Caco-2 (cell line): ENCODE measurements at regions of chr12 and their contacts with region 1.

Region 1: DNA sequence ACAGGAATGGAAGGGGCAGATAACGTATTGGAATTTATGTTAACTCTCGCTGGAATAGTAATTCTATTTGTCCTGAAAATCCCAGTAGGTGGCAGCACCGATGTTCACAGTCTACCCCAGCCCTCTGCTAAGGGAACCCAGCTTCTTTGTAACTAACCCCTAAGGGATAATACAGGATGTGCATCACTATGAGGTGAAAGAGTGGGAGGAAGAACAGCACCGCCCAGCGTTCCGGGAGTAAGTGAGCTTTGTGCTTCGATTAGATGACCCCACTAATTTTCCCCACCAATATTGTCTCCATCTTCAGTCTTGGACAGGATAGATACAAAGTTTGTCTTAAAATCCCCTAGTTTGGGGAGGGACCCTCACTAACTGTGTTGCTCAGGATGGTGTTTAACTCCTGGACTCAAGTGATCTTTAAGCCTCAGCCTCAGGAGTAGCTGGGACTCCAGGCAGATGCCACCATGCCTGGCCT is 2.7 kb downstream of the SLC2A3 start:
- DNase-seq: peak; percentile 85 to 87
- H3K4me3 ChIP-seq: peak overlapping the region; percentile 76
- H3K4me3 Mint-ChIP-seq: no peak overlapping the region
- H3K27ac Mint-ChIP-seq: no peak overlapping the region
- H3K4me1 ChIP-seq: peaks cover 46% of the 10 kb centered on the region
- H3K4me1 Mint-ChIP-seq: peaks cover 33% of the 10 kb centered on the region
- H3K27me3 ChIP-seq: no peaks in the 10 kb centered on the region
- H3K27me3 Mint-ChIP-seq: no peaks in the 10 kb centered on the region
- CTCF ChIP-seq: peak; percentile 79 to 82

Region 2: DNA sequence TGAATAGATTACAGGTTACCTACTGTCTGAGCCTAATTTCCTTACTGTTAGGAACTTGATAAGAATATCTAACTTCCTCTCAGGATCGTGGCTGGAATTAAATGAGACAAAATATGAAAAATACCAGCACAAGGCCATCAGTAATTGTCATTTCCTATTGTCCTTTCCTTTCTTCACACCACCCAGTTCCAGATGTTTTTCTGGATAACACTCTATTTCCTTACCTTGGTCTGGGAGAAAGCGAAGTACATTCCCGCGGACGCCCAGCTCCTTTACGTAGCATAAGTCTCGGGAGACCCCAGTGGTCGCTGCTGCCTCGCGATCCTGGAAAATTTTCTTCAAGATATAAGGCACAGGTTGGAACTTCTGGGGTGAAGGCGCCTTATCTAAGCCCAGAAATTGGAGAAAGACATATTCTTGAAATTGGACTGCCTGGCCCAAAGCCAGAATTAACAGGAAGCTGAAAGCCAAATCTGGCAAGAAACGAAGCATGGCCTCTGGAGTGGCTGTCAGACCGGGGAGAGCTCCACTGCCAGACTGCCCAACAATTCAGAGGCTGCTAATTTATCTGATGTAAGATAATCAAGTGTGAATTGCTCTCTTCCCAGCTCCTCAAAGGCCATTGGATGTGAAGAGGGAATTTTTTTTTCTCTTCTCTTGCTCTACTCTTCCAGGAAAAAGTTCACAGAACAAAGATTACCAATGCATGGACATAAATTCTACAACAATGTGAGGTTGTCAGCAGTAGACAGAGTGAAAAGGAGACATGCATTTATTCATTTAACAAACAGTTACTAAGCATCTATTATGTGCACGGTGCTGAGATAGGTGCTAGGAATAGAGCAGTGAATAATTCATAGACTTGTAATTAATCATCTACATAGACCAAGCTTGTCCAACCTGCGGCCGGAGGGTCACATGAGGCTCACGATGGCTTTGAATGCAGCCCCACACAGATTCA is 237.8 kb before region 1 on chr12 and contains the start of gene GDF3:
- CTCF ChIA-PET with region 1: no interaction called
- POLR2A ChIA-PET with region 1: no interaction called
- intact Hi-C with region 1: no loop called
- DNase-seq: no peak
- H3K4me3 ChIP-seq: no peak within 1 kb of the TSS
- H3K4me3 Mint-ChIP-seq: no peak within 1 kb of the TSS
- H3K27ac Mint-ChIP-seq: peak within 1 kb of the TSS; percentile 21
- H3K4me1 ChIP-seq: peaks cover 6% of the 10 kb centered on the region
- H3K4me1 Mint-ChIP-seq: peaks cover 27% of the 10 kb centered on the region
- H3K27me3 ChIP-seq: no peaks in the 10 kb centered on the region
- H3K27me3 Mint-ChIP-seq: no peaks in the 10 kb centered on the region
- CTCF ChIP-seq: no peak
- total RNA-seq, gene GDF3: 0.41 TPM in 1 of 2 replicates, not detected in the other

Region 3: DNA sequence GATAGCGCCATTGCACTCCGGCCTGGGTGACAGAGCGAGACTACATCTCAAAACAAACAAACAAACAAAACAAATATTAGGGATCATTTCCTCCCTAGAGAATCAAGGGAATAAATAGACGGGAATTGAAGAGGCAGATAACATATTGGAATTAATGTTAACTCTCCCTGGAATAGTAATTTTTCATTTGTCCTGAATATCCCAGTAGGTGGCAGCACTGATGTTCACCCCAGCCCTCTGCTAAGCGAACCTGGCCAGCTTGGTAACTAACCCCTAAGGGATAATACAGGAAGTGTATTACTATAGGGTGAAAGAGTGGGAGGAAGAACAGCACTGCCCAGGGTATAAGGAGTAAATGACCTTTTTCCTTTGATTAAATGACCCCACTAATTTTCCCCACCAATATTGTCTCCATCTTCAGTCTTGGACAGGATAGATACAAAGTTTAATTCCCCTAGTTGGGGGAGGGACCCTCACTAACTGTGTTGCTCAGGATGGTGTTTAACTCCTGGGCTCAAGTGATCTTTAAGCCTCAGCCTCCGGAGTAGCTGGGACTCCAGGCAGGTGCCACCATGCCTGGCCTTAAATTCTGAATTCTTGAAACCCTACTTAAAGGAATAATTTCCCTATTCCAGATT is 101.1 kb before region 1 on chr12:
- CTCF ChIA-PET with region 1: interaction called, 13 read pairs
- POLR2A ChIA-PET with region 1: interaction called, 8 read pairs
- intact Hi-C with region 1: no loop called
- DNase-seq: peak; percentile 80 to 85
- H3K4me3 ChIP-seq: no peak overlapping the region
- H3K4me3 Mint-ChIP-seq: peak overlapping the region; percentile 1
- H3K27ac Mint-ChIP-seq: peak overlapping the region; percentile 60
- H3K4me1 ChIP-seq: peaks cover 61% of the 10 kb centered on the region
- H3K4me1 Mint-ChIP-seq: peaks cover 51% of the 10 kb centered on the region
- H3K27me3 ChIP-seq: no peaks in the 10 kb centered on the region
- H3K27me3 Mint-ChIP-seq: no peaks in the 10 kb centered on the region
- CTCF ChIP-seq: peak; percentile 73 to 86

Region 4: DNA sequence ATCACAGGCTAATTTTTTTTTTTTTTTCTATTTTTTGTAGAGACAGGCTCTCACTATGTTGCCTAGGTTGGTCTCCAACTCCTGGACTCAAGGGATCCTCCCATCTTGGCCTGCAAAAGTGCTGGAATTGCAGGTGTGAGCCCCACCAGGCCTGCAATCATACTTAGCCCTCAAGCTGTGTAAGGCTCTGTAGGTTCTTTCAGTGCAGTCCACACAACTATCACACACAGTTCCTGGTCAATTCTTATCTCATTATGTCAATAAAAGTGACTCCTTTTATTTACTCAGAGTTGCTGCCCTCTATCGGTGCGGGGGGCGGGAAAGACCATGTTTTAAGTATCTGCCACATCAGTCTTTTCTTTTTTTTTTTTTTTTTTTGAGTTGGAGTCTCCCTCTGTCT is 26.3 kb before region 1 on chr12:
- CTCF ChIA-PET with region 1: interaction called, 16 read pairs
- POLR2A ChIA-PET with region 1: interaction called, 9 read pairs
- intact Hi-C with region 1: no loop called
- DNase-seq: peak; percentile 96 to 98
- H3K4me3 ChIP-seq: no peak overlapping the region
- H3K4me3 Mint-ChIP-seq: peak overlapping the region; percentile 54
- H3K27ac Mint-ChIP-seq: peak overlapping the region; percentile 98
- H3K4me1 ChIP-seq: peaks cover 34% of the 10 kb centered on the region
- H3K4me1 Mint-ChIP-seq: peaks cover 38% of the 10 kb centered on the region
- H3K27me3 ChIP-seq: no peaks in the 10 kb centered on the region
- H3K27me3 Mint-ChIP-seq: no peaks in the 10 kb centered on the region
- CTCF ChIP-seq: peak; percentile 81 to 83

Region 5: GRCh38 chr12:7948589-7949260 is 15.4 kb after region 1 on chr12:
- CTCF ChIA-PET with region 1: interaction called, 4 read pairs
- POLR2A ChIA-PET with region 1: interaction called, 25 read pairs
- intact Hi-C with region 1: no loop called
- DNase-seq: no peak
- H3K4me3 ChIP-seq: no peak overlapping the region
- H3K4me3 Mint-ChIP-seq: peak overlapping the region; percentile 13
- H3K27ac Mint-ChIP-seq: peak overlapping the region; percentile 18
- H3K4me1 ChIP-seq: peaks cover 22% of the 10 kb centered on the region
- H3K4me1 Mint-ChIP-seq: peaks cover 18% of the 10 kb centered on the region
- H3K27me3 ChIP-seq: no peaks in the 10 kb centered on the region
- H3K27me3 Mint-ChIP-seq: no peaks in the 10 kb centered on the region
- CTCF ChIP-seq: no peak

Region 6: GRCh38 chr12:7970475-7971252 is 37.4 kb after region 1 on chr12:
- CTCF ChIA-PET with region 1: interaction called, 5 read pairs
- POLR2A ChIA-PET with region 1: interaction called, 749 read pairs
- intact Hi-C with region 1: loop called (anchors 1 kb)
- DNase-seq: peak; percentile 99
- H3K4me3 ChIP-seq: peak overlapping the region; percentile 43
- H3K4me3 Mint-ChIP-seq: peak overlapping the region; percentile 75
- H3K27ac Mint-ChIP-seq: peak overlapping the region; percentile 76
- H3K4me1 ChIP-seq: peaks cover 34% of the 10 kb centered on the region
- H3K4me1 Mint-ChIP-seq: peaks cover 15% of the 10 kb centered on the region
- H3K27me3 ChIP-seq: no peaks in the 10 kb centered on the region
- H3K27me3 Mint-ChIP-seq: no peaks in the 10 kb centered on the region
- CTCF ChIP-seq: peak in 1 of 2 experiments; percentile 43

Region 7: DNA sequence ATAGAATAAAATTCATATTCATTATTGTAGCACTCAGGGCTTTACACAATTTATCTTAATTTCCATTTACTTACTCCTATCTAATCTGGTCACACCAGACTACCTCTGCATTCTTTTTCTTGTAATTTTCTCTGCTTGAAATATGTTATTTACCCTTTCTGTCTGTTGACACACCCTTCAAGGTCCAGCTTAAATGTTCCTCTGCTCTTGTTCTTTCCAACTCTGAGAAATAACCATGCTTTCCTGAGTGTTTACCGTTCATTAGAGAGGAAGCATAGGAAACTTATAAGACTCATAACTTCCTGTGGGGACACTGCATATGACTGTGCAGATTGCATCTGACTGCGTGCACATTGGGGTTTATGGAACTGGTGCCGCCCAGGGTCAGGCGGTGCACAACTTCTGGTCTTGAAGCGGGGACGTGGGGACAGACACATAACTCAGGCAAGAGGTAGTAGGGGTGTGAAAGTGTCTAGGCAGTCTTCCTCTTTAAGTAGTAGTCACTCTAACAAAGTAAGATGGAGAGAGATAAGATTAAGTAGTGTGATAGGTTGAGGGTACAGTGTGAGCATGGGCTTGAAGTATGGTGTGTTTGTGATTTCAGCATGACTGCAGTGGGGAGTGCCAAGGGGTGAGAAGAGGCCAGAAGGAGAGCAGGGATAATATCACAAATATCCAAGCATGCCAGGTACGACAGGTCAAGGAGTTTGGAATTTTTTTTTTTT is 56.7 kb after region 1 on chr12:
- CTCF ChIA-PET with region 1: interaction called, 25 read pairs
- POLR2A ChIA-PET with region 1: interaction called, 19 read pairs
- intact Hi-C with region 1: loop called (anchors 1 kb)
- DNase-seq: peak; percentile 71 to 85
- H3K4me3 ChIP-seq: no peak overlapping the region
- H3K4me3 Mint-ChIP-seq: peak overlapping the region; percentile 52
- H3K27ac Mint-ChIP-seq: peak overlapping the region; percentile 82
- H3K4me1 ChIP-seq: peaks cover 94% of the 10 kb centered on the region
- H3K4me1 Mint-ChIP-seq: peaks cover 31% of the 10 kb centered on the region
- H3K27me3 ChIP-seq: no peaks in the 10 kb centered on the region
- H3K27me3 Mint-ChIP-seq: no peaks in the 10 kb centered on the region
- CTCF ChIP-seq: no peak

Region 8: DNA sequence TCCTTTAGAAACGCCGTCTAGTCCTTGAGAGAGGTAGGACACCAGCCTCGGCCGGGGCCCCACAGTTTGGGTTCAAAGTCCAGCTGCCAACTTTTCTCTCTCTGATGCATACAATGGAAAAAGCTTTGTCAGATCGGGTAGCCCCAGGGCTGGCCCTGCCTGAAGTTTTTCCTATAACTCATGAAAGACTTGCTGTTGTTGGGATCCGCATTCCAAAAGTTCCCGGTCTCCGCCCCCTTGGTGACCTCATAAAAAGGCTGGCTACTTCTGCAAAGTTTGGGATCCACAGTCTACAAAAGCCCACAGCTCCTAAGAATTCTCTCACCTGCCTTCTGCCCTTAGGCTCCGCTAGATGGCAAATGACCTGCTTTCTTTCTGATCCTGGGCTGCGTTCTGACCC is 487.2 kb after region 1 on chr12:
- CTCF ChIA-PET with region 1: no interaction called
- POLR2A ChIA-PET with region 1: no interaction called
- intact Hi-C with region 1: no loop called
- DNase-seq: no peak
- H3K4me3 ChIP-seq: no peak overlapping the region
- H3K4me3 Mint-ChIP-seq: no peak overlapping the region
- H3K27ac Mint-ChIP-seq: no peak overlapping the region
- H3K4me1 ChIP-seq: no peaks in the 10 kb centered on the region
- H3K4me1 Mint-ChIP-seq: no peaks in the 10 kb centered on the region
- H3K27me3 ChIP-seq: no peaks in the 10 kb centered on the region
- H3K27me3 Mint-ChIP-seq: no peaks in the 10 kb centered on the region
- CTCF ChIP-seq: no peak